Astrocyte of the cerebellum (primary cell): ENCODE measurements at regions of chr16 and their contacts with region 1.

Region 1: DNA sequence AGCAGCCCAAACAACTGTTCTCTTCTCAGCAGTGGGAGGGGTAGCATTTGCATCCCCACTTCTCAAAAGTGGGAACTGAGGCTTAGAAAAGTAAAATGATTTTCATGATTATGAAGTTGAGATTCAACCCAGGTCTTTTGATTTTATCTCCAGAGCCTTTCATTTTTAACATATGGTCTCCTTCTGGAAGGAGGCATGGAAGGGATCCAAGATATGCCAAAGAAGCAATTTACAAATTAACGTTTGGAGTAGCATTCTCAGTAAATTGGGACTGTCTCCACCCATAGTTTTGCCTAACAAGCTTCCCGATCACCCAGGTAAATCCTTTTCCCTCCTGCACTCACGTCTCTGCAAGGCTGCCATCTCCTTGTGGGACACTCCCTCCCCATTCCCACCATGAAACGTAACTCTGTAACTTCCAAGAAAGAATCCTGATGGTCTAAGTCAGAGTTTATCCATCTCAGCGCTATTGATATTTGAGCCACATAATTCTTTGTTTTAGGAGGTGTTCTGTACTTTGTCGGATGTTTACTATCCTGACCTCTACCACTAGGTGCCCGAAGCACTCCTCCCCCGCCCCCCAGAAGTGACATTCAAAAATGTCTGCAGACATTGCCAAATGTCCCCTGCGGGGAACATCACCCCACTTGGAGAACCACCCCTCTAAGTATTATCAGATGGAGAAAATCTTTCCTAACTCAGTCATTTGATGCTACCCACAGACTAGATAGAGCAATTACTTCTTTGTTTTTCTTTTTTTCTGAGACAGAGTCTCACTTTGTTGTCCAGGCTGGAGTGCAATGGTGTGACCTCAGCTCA is 32.9 kb upstream of the NFAT5 start:
- DNase-seq: no peak
- H3K4me3 ChIP-seq: no peak overlapping the region
- CTCF ChIP-seq: no peak

Region 2: GRCh38 chr16:69660166-69660565 is 127.3 kb after region 1 on chr16:
- in situ Hi-C with region 1: loop called (anchors 5 kb)
- DNase-seq: no peak
- H3K4me3 ChIP-seq: no peak overlapping the region
- CTCF ChIP-seq: no peak